Posterior cingulate gyrus (tissue), 11 donors: ENCODE measurements at regions of chr19 and their contacts with region 1.

Region 1: GRCh38 chr19:6862673-6863078 is 24.7 kb upstream of the ADGRE1 start:
- DNase-seq: peak; percentile 36 to 95 (median 74)

Region 2: GRCh38 chr19:6516659-6517291 is 345.9 kb before region 1 on chr19:
- intact Hi-C with region 1: loop called (anchors 2 kb)
- DNase-seq: peak; percentile 81 to 99 (median 96)

Region 3: GRCh38 chr19:6632002-6632621 is 230.6 kb before region 1 on chr19:
- intact Hi-C with region 1: loop called (anchors 1 kb)
- DNase-seq: peak in 5 of 10 donors; percentile 13 to 74 (median 57)

Region 4: GRCh38 chr19:6737284-6738046 is 125.2 kb before region 1 on chr19 and contains the start of gene GPR108:
- intact Hi-C with region 1: loop called (anchors 1 kb)
- DNase-seq: peak; percentile 100